Cardiac septum (tissue), 1 donor: ENCODE measurements at regions of chr5 and their contacts with region 1.

Region 1: DNA sequence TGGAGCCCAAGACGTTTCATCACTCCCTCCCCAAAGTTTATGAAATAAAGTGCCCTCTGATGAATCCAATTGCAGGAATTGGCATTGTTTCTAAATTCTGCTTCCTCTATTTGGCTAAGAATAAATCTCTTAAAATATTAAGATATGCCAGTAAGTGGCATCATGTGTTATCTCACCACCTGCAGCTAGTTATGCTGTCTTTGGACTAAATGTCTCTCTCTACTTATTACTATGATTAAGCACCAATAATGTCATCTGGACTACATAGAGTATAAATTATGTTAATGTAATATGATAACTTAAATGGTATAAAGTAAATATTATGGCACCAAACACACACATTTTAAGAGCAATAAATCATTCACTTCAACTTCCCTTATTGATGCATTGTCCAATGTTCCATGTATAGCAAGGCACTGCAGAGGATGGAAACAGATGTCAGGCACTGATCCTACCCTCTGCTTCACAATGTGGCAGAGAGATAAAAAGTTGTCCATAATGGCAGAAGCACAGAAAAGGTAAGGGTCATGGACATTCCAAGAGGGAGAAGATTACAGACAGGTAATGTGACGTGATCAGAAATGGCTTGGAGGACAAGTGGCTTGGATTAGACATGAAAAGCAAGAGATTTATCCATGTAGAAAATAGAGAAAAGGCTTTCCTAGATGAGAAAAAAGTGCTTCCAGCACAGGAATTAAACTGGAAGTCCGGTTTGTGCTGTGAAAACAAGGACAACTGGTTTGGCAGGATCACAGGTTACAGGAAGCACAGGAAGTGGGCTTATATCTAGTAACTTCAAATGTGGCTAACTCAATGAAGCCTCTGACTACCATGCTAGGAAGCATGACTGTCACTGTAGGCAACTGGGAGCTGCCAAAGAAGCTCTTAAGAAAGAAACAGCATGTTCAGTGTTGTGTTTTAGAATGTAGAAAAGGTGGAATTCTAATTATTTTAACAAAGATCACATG is 26.7 kb downstream of the MARCHF11 start:
- DNase-seq: no peak

Region 2: GRCh38 chr5:15774632-15775031 is 378.3 kb before region 1 on chr5:
- intact Hi-C with region 1: no loop called
- DNase-seq: no peak

Region 3: GRCh38 chr5:16005225-16005624 is 147.7 kb before region 1 on chr5:
- intact Hi-C with region 1: loop called (anchors 5 kb)
- DNase-seq: no peak